ENCODE measurements at regions of chr6 and their contacts with region 1.

Region 1: DNA sequence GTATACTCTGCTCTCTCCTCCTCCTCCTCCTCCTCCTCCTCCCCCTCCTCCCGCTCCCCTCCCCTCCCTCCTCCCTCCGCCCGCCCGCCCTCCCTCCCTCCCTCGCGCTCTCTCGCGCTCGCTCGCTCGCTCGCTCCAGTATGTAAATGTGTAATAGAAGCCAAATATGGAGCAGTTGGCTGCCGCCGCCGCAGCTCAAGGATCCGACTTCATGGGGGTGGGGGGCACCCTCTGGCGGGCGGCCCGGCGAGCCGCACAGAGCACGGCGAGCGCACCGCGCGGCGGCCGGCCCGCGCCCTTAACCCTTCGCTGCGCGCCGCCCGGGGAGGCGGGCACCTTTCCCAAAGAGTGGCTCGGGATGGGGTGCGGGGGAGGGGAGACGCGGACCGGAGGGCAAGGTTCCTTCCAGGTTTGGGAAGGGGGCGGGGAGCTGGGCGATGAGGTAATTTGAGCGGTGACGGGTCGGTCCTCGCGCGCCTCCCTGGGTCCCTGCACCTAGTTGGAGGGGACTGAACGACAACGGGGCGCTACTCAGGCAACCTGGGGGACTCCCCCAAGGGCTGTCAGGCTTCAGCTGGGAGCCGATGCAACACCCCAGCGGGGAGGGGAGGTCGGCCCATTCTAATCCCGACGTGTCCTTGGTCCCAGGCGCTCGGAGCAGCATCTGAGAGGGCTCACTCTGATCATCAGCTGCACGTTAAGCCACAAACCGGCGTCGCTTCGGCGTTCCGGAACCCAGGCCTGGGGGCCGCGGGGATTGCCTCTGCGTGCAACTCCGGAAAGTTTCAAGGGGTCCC is 409 bp upstream of the ATXN1 start:
- DNase-seq: peak; percentile 82 to 93 (median 84)
- H3K4me3 ChIP-seq: peak overlapping the region; percentile 89
- H3K4me3 Mint-ChIP-seq: peak overlapping the region; percentile 92 to 100 (median 98)
- H3K27ac ChIP-seq: peak overlapping the region; percentile 98
- H3K27ac Mint-ChIP-seq: peak overlapping the region; percentile 97 to 100 (median 99)
- H3K4me1 ChIP-seq: peaks cover 46% of the 10 kb centered on the region
- H3K4me1 Mint-ChIP-seq: peaks cover 59 to 71% (median 67%) of the 10 kb centered on the region in 3 donors
- H3K27me3 ChIP-seq: no peaks in the 10 kb centered on the region
- H3K27me3 Mint-ChIP-seq: peaks cover 0 to 4% of the 10 kb centered on the region in 2 donors

Region 2: DNA sequence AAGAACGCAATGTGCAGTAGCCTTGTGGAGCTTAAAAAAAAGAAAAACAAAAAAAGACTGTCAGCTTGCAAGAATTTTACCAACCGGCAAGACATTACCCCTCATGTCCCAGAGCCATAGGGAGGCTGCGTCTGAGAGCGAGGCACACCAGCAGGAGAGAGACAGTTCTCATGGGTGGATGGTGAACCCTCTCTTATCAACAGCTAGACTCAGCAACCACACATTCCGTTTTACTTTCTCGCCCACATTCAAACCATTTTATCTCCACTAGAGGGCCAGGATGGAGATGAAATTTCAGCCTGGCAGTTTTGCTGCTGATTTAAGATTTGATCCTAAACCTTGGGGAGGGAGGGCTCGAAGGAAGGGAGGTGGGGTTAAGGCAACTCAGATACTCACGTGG is 247.4 kb before region 1 on chr6:
- CTCF ChIA-PET with region 1: interaction called, 28 read pairs
- POLR2A ChIA-PET with region 1: interaction called, 4 read pairs
- DNase-seq: peak in 2 of 5 donors; percentile 27 to 36
- H3K4me3 ChIP-seq: no peak overlapping the region
- H3K4me3 Mint-ChIP-seq: peak overlapping the region in 1 of 7 donors; percentile 29
- H3K27ac ChIP-seq: no peak overlapping the region
- H3K27ac Mint-ChIP-seq: peak overlapping the region; percentile 11 to 91 (median 76)
- H3K4me1 ChIP-seq: peaks cover 44% of the 10 kb centered on the region
- H3K4me1 Mint-ChIP-seq: peaks cover 53 to 81% (median 81%) of the 10 kb centered on the region in 3 donors
- H3K27me3 ChIP-seq: no peaks in the 10 kb centered on the region
- H3K27me3 Mint-ChIP-seq: no peaks in the 10 kb centered on the region

Region 3: GRCh38 chr6:16651871-16652270 is 109.8 kb before region 1 on chr6:
- CTCF ChIA-PET with region 1: interaction called, 19 read pairs
- POLR2A ChIA-PET with region 1: interaction called, 12 read pairs
- DNase-seq: peak in 3 of 5 donors; percentile 18 to 74 (median 48)
- H3K4me3 ChIP-seq: no peak overlapping the region
- H3K4me3 Mint-ChIP-seq: peak overlapping the region; percentile 14 to 82 (median 63)
- H3K27ac ChIP-seq: no peak overlapping the region
- H3K27ac Mint-ChIP-seq: peak overlapping the region; percentile 62 to 98 (median 94)
- H3K4me1 ChIP-seq: peaks cover 42% of the 10 kb centered on the region
- H3K4me1 Mint-ChIP-seq: peaks cover 55 to 74% (median 63%) of the 10 kb centered on the region in 3 donors
- H3K27me3 ChIP-seq: no peaks in the 10 kb centered on the region
- H3K27me3 Mint-ChIP-seq: no peaks in the 10 kb centered on the region

Region 4: GRCh38 chr6:16700202-16700915 is 61.3 kb before region 1 on chr6:
- CTCF ChIA-PET with region 1: interaction called, 6 read pairs
- POLR2A ChIA-PET with region 1: interaction called, 19 read pairs
- DNase-seq: peak; percentile 20 to 66 (median 32)
- H3K4me3 ChIP-seq: peak overlapping the region; percentile 73
- H3K4me3 Mint-ChIP-seq: peak overlapping the region; percentile 86 to 96 (median 92)
- H3K27ac ChIP-seq: peak overlapping the region; percentile 86
- H3K27ac Mint-ChIP-seq: peak overlapping the region; percentile 87 to 99 (median 94)
- H3K4me1 ChIP-seq: peaks cover 35% of the 10 kb centered on the region
- H3K4me1 Mint-ChIP-seq: peaks cover 73 to 92% (median 83%) of the 10 kb centered on the region in 3 donors
- H3K27me3 ChIP-seq: no peaks in the 10 kb centered on the region
- H3K27me3 Mint-ChIP-seq: peaks cover 0 to 1% of the 10 kb centered on the region in 2 donors

Region 5: DNA sequence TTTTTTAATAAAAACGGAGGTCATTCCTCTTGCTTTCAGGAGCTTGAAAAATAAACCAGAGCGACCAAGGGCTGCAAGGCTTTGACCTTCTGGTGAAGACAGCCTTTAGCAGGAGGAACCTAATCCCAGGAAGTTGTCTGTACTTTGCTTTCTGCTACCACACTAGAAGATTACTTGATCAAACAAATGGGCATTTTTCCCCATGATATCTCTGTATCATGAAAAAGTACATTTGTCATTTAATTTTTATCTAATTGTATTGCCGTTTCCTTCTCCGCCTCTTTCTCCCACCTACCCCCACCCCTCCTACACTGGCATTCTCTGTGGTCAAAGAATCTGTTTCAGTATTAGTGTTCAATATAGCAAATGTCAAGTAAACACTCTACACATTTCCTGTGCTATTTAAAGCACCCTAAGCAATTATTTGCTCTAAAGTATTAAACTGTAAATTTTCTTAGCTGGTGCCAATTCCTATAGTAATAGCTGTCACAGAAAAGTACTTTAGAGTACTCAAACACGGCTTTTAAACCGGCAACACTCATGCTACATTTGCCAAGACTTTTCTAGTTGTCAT is 30.1 kb before region 1 on chr6:
- CTCF ChIA-PET with region 1: interaction called, 37 read pairs
- POLR2A ChIA-PET with region 1: interaction called, 27 read pairs
- DNase-seq: peak in 2 of 5 donors; percentile 44 to 69
- H3K4me3 ChIP-seq: no peak overlapping the region
- H3K4me3 Mint-ChIP-seq: peak overlapping the region; percentile 73 to 83 (median 79)
- H3K27ac ChIP-seq: peak overlapping the region; percentile 21
- H3K27ac Mint-ChIP-seq: peak overlapping the region; percentile 76 to 96 (median 88)
- H3K4me1 ChIP-seq: peaks cover 37% of the 10 kb centered on the region
- H3K4me1 Mint-ChIP-seq: peaks cover 58 to 87% (median 84%) of the 10 kb centered on the region in 3 donors
- H3K27me3 ChIP-seq: no peaks in the 10 kb centered on the region
- H3K27me3 Mint-ChIP-seq: peaks cover 0 to 3% of the 10 kb centered on the region in 2 donors

Region 6: DNA sequence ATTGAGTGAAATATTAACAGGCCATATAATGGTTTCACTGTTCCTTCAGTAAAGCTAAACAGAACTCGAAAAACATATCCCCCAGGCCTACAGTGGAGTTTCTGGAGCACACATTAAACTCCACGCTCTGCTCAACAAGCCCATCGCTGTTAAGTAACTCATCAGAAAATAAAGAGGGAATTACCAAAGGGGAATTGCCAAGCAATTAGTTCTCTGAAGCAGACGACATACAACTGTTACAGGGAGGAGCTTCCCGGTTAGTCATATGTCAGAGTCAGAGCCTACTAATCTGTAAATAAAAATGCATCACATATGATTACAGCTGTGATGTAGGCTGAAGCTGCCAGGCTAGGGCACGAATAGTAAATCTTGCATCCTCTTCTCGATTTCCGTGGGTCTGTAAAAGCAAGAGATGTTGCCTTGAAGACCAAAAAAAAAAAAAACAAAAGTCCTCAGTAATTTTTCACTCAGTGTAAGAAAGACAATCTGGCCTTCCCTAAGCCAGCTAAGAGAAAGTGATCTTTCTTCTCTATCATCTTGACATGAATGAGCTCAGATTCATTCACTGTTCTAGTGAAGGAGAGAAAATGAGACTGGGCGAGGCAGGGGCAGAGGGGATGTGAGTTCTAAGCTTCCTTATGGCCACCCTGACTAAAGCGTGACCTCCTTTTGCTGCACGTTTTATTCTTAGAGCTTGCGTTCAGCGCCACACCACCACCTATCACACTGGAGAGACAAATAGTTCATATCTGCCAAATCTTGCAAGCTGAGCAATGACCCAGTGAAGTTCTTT is 14.2 kb before region 1 on chr6:
- CTCF ChIA-PET with region 1: interaction called, 15 read pairs
- POLR2A ChIA-PET with region 1: interaction called, 21 read pairs
- DNase-seq: no peak
- H3K4me3 ChIP-seq: no peak overlapping the region
- H3K4me3 Mint-ChIP-seq: peak overlapping the region in 6 of 7 donors; percentile 24 to 65 (median 46)
- H3K27ac ChIP-seq: no peak overlapping the region
- H3K27ac Mint-ChIP-seq: peak overlapping the region; percentile 34 to 91 (median 82)
- H3K4me1 ChIP-seq: peaks cover 7% of the 10 kb centered on the region
- H3K4me1 Mint-ChIP-seq: peaks cover 74 to 99% (median 99%) of the 10 kb centered on the region in 3 donors
- H3K27me3 ChIP-seq: no peaks in the 10 kb centered on the region
- H3K27me3 Mint-ChIP-seq: no peaks in the 10 kb centered on the region

Region 7: DNA sequence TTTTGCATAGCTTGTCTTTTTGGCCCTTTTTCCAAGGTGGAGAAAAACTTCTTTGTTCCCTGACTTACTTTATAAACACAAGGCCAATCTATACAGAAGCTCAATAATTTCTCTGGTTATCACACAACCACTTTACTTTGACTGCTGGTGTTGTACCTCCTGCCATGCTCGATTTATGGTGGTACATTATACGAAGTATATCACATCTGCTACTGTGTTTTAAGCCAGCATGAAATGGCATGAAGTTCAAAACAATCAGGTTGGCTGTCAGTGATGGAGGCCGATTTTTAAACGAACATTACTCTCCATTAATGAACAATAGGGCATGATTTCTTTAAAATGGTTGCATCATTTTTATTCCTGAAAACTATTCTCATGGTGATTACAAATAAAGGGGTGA is 20.6 kb after region 1 on chr6:
- CTCF ChIA-PET with region 1: no interaction called
- POLR2A ChIA-PET with region 1: no interaction called
- DNase-seq: no peak
- H3K4me3 ChIP-seq: no peak overlapping the region
- H3K4me3 Mint-ChIP-seq: no peak overlapping the region
- H3K27ac ChIP-seq: no peak overlapping the region
- H3K27ac Mint-ChIP-seq: no peak overlapping the region
- H3K4me1 ChIP-seq: no peaks in the 10 kb centered on the region
- H3K4me1 Mint-ChIP-seq: peaks cover 5 to 10% (median 6%) of the 10 kb centered on the region in 3 donors
- H3K27me3 ChIP-seq: no peaks in the 10 kb centered on the region
- H3K27me3 Mint-ChIP-seq: peaks cover 3 to 7% of the 10 kb centered on the region in 2 donors

Measured in CD8-positive, alpha-beta memory T cell (primary cell).